HEK293 (cell line): ENCODE measurements at regions of chr10 and their contacts with region 1.

Region 1: GRCh38 chr10:125868372-125868975 is 12.6 kb downstream of the DHX32 start:
- H3K4me3 ChIP-seq: no peak overlapping the region
- H3K27ac ChIP-seq: no peak overlapping the region
- H3K4me1 ChIP-seq: peaks cover 10% of the 10 kb centered on the region
- CTCF ChIP-seq: peak; percentile 38; the same call in 1 of the 2 replicates

Region 2: GRCh38 chr10:125707541-125708468 is 160.7 kb before region 1 on chr10:
- CTCF ChIA-PET with region 1: no interaction called
- POLR2A ChIA-PET with region 1: no interaction called
- H3K4me3 ChIP-seq: no peak overlapping the region
- H3K27ac ChIP-seq: peak overlapping the region; percentile 59; the same call in 1 of the 2 replicates
- H3K4me1 ChIP-seq: peaks cover 36% of the 10 kb centered on the region
- CTCF ChIP-seq: no peak

Region 3: GRCh38 chr10:125878957-125879835 is 10.7 kb after region 1 on chr10:
- CTCF ChIA-PET with region 1: interaction called, 16 read pairs
- POLR2A ChIA-PET with region 1: no interaction called
- H3K4me3 ChIP-seq: no peak overlapping the region
- H3K27ac ChIP-seq: 0 out of 2 replicates have a peak overlapping the region, but pooled peaks have one; percentile 17
- H3K4me1 ChIP-seq: 0 out of 2 replicates have a peak, but pooled peaks cover 3% of the 10 kb centered on the region
- CTCF ChIP-seq: no peak

Region 4: DNA sequence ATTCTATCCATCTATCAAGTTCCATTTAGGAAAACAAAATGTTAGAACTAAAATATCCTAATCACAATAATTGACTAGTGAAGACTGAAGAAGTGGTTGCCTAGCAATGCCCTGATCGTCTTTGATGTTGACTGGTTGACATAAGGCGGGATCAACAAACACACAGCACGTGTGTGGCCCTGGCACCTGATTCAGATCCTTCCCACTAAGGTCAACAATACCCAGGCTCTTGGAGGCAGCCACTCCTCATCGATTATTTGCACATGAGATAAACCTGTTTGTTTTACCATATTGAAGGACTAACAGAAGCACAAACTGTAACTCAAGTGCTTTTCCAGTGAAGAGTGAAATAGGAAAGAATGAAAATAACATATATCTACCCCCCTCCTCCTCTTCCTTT is 43.5 kb after region 1 on chr10:
- CTCF ChIA-PET with region 1: no interaction called
- POLR2A ChIA-PET with region 1: no interaction called
- H3K4me3 ChIP-seq: no peak overlapping the region
- H3K27ac ChIP-seq: no peak overlapping the region
- H3K4me1 ChIP-seq: no peaks in the 10 kb centered on the region; the same call in 1 of the 2 replicates
- CTCF ChIP-seq: no peak